Caco-2 (cell line): ENCODE measurements at regions of chr5 and their contacts with region 1.

Region 1: GRCh38 chr5:128083033-128083810 is at the start of gene SLC12A2:
- DNase-seq: peak; percentile 93
- H3K4me3 ChIP-seq: peak within 1 kb of the TSS; percentile 97
- H3K4me3 Mint-ChIP-seq: peak within 1 kb of the TSS; percentile 87
- H3K27ac Mint-ChIP-seq: peak within 1 kb of the TSS; percentile 81
- H3K4me1 ChIP-seq: peaks cover 15% of the 10 kb centered on the region; the same call in 1 of the 2 replicates
- H3K4me1 Mint-ChIP-seq: peaks cover 47% of the 10 kb centered on the region
- H3K27me3 ChIP-seq: no peaks in the 10 kb centered on the region
- H3K27me3 Mint-ChIP-seq: no peaks in the 10 kb centered on the region
- CTCF ChIP-seq: no peak
- total RNA-seq, gene SLC12A2: 85.2 and 87.8 TPM in 2 replicates

Region 2: DNA sequence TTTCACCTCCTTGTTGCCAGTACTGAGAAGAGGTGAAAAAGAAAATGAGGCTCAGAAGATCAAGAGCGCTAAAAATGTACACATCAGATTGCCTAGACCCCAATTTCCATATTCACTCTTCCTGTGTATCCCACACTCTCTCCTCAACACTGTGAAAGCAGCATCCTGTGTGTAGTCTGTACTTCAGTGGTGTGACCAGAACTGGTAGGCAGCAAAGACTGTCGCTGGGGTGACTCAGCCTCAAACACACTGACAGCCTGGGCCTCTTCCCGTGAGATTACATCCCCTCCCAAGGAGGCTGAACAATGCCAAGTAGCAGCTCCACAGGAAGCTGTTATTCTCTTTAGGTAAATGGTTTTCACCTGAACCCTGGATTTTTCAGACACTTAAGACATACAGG is 244.6 kb before region 1 on chr5:
- CTCF ChIA-PET with region 1: no interaction called
- POLR2A ChIA-PET with region 1: interaction called, 19 read pairs
- intact Hi-C with region 1: no loop called
- DNase-seq: no peak
- H3K4me3 ChIP-seq: no peak overlapping the region
- H3K4me3 Mint-ChIP-seq: no peak overlapping the region
- H3K27ac Mint-ChIP-seq: peak overlapping the region; percentile 80
- H3K4me1 ChIP-seq: peaks cover 7% of the 10 kb centered on the region
- H3K4me1 Mint-ChIP-seq: peaks cover 14% of the 10 kb centered on the region
- H3K27me3 ChIP-seq: no peaks in the 10 kb centered on the region
- H3K27me3 Mint-ChIP-seq: no peaks in the 10 kb centered on the region
- CTCF ChIP-seq: no peak

Region 3: DNA sequence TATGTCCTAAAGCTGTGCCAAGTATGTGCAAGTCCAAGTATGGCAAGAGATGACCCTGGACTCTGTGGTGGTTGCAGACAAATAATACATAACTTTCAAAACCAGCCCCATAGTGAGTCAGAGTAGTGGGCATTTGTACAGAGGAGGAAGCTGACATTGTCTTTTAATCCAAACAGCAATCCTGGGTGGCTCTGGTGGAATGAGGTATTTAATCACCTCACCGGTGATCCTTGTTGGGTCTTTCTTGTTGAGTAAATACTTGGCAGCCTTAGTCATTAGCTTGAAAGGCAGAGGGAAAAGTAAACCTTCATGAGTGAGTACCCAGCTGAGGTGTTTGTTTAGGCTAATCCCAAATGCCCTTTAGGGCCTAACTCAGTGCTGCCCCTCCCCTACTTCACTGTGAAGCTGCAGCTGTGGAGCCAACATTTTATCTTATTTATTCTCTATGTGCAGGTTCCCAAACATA is 148.4 kb before region 1 on chr5:
- CTCF ChIA-PET with region 1: no interaction called
- POLR2A ChIA-PET with region 1: no interaction called
- intact Hi-C with region 1: loop called (anchors 1 kb)
- DNase-seq: peak; percentile 78 to 84
- H3K4me3 ChIP-seq: no peak overlapping the region
- H3K4me3 Mint-ChIP-seq: no peak overlapping the region
- H3K27ac Mint-ChIP-seq: peak overlapping the region; percentile 32
- H3K4me1 ChIP-seq: peaks cover 42% of the 10 kb centered on the region
- H3K4me1 Mint-ChIP-seq: peaks cover 60% of the 10 kb centered on the region
- H3K27me3 ChIP-seq: no peaks in the 10 kb centered on the region
- H3K27me3 Mint-ChIP-seq: no peaks in the 10 kb centered on the region
- CTCF ChIP-seq: peak in 1 of 2 experiments; percentile 43

Region 4: GRCh38 chr5:128014578-128014977 is 68.6 kb before region 1 on chr5:
- CTCF ChIA-PET with region 1: no interaction called
- POLR2A ChIA-PET with region 1: no interaction called
- intact Hi-C with region 1: no loop called
- DNase-seq: no peak
- H3K4me3 ChIP-seq: no peak overlapping the region
- H3K4me3 Mint-ChIP-seq: no peak overlapping the region
- H3K27ac Mint-ChIP-seq: no peak overlapping the region
- H3K4me1 ChIP-seq: 0 out of 2 replicates have a peak, but pooled peaks cover 4% of the 10 kb centered on the region
- H3K4me1 Mint-ChIP-seq: peaks cover 8% of the 10 kb centered on the region
- H3K27me3 ChIP-seq: no peaks in the 10 kb centered on the region
- H3K27me3 Mint-ChIP-seq: no peaks in the 10 kb centered on the region
- CTCF ChIP-seq: no peak

Region 5: DNA sequence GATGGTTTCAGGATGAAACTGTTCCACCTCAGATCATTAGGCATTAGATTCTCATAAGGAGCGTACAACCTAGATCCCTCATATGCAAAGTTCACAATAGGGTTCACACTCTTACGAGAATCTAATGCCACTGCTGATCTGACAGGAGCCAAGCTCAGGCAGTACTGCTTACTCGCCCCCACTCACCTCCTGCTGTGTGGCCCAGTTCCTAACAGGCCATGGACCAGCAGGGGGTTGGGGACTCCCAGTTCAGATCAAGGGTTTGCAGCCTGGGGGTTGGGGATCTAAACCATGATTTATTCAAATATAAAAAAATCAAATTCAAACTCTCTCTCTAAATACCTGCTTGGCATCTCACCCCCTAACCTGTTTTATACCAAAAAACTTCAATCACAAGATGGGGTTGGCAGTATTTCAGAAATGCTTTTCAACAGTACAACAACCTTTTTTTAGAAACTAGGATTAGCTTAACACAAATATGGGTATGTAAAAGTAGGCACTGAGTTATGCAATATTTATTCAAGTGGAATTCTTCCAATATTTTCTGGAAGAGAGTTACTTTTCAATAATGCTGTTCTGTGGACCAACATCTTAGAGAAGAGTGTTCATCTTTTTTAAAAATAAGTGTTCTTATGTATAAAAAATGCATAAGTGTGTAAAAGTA is 29.8 kb before region 1 on chr5:
- CTCF ChIA-PET with region 1: no interaction called
- POLR2A ChIA-PET with region 1: no interaction called
- intact Hi-C with region 1: no loop called
- DNase-seq: no peak
- H3K4me3 ChIP-seq: no peak overlapping the region
- H3K4me3 Mint-ChIP-seq: no peak overlapping the region
- H3K27ac Mint-ChIP-seq: no peak overlapping the region
- H3K4me1 ChIP-seq: 0 out of 2 replicates have a peak, but pooled peaks cover 7% of the 10 kb centered on the region
- H3K4me1 Mint-ChIP-seq: peaks cover 6% of the 10 kb centered on the region
- H3K27me3 ChIP-seq: no peaks in the 10 kb centered on the region
- H3K27me3 Mint-ChIP-seq: no peaks in the 10 kb centered on the region
- CTCF ChIP-seq: no peak

Region 6: GRCh38 chr5:128111818-128112448 is 28.7 kb after region 1 on chr5:
- CTCF ChIA-PET with region 1: no interaction called
- POLR2A ChIA-PET with region 1: no interaction called
- intact Hi-C with region 1: no loop called
- DNase-seq: no peak
- H3K4me3 ChIP-seq: no peak overlapping the region
- H3K4me3 Mint-ChIP-seq: no peak overlapping the region
- H3K27ac Mint-ChIP-seq: no peak overlapping the region
- H3K4me1 ChIP-seq: no peaks in the 10 kb centered on the region
- H3K4me1 Mint-ChIP-seq: no peaks in the 10 kb centered on the region
- H3K27me3 ChIP-seq: no peaks in the 10 kb centered on the region
- H3K27me3 Mint-ChIP-seq: no peaks in the 10 kb centered on the region
- CTCF ChIP-seq: no peak

Region 7: GRCh38 chr5:128154943-128155342 is 71.7 kb after region 1 on chr5:
- CTCF ChIA-PET with region 1: no interaction called
- POLR2A ChIA-PET with region 1: no interaction called
- intact Hi-C with region 1: loop called (anchors 10 kb)
- DNase-seq: no peak
- H3K4me3 ChIP-seq: no peak overlapping the region
- H3K4me3 Mint-ChIP-seq: no peak overlapping the region
- H3K27ac Mint-ChIP-seq: no peak overlapping the region
- H3K4me1 ChIP-seq: peaks cover 27% of the 10 kb centered on the region
- H3K4me1 Mint-ChIP-seq: peaks cover 2% of the 10 kb centered on the region
- H3K27me3 ChIP-seq: no peaks in the 10 kb centered on the region
- H3K27me3 Mint-ChIP-seq: no peaks in the 10 kb centered on the region
- CTCF ChIP-seq: no peak

Region 8: DNA sequence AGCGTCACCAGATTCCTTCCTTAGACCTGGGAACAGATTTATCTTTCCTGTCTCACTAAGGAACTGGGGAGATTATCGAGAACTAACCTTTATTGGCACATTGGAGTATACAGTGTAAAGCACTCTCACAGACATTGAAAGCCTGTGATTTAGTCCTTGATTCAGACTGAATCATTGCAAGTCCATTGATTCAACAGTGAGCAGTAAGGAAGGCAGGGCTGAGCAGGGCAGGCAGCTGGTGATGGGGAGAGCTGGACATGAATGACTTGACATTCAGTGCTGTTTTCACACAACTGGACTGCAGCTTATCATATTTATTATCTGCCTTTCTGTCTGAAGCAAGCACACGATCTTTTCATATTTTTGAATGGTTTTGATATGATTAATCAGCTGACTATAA is 1027.5 kb after region 1 on chr5:
- CTCF ChIA-PET with region 1: no interaction called
- POLR2A ChIA-PET with region 1: no interaction called
- intact Hi-C with region 1: no loop called
- DNase-seq: no peak
- H3K4me3 ChIP-seq: no peak overlapping the region
- H3K4me3 Mint-ChIP-seq: no peak overlapping the region
- H3K27ac Mint-ChIP-seq: no peak overlapping the region
- H3K4me1 ChIP-seq: no peaks in the 10 kb centered on the region
- H3K4me1 Mint-ChIP-seq: no peaks in the 10 kb centered on the region
- H3K27me3 ChIP-seq: no peaks in the 10 kb centered on the region
- H3K27me3 Mint-ChIP-seq: no peaks in the 10 kb centered on the region
- CTCF ChIP-seq: no peak